H1 (cell line): ENCODE measurements at regions of chr2 and their contacts with region 1.

Region 1: DNA sequence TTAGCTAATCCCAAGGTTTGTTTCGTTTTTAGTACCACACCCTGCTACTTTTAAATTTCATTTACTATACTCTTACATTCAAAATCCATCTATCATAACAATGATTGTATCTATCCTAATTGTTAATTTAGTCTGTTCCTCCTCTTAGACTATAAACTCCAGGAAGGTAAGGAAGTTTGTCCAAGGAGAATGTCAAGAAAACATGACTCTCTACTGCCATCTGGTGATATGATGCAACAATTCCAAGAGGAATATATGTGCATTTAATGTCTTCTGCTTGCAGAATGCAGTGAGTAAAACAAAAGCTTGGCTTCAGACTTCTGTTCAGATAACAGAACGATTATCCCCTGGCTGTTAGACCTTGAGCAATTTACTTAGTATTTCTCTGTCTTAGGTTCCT is 1267.1 kb downstream of the LRP1B start:
- DNase-seq: no peak
- H3K4me3 ChIP-seq: no peak overlapping the region
- H3K27ac ChIP-seq: no peak overlapping the region
- H3K4me1 ChIP-seq: peaks cover 0 to 5% (median 0%) of the 10 kb centered on the region in 4 experiments; a peak in 2 of 7 replicates
- H3K27me3 ChIP-seq: no peaks in the 10 kb centered on the region
- CTCF ChIP-seq: peak in 2 of 3 experiments; percentile 34 to 58; a peak in 2 of 4 replicates
- EP300 ChIP-seq: no peak
- POLR2A ChIP-seq: no peak
- RAD21 ChIP-seq: peak; percentile 63 to 73

Region 2: GRCh38 chr2:140842110-140842509 is 21.6 kb before region 1 on chr2:
- CTCF ChIA-PET with region 1: interaction called, 13 read pairs
- POLR2A ChIA-PET with region 1: no interaction called
- DNase-seq: no peak
- H3K4me3 ChIP-seq: no peak overlapping the region
- H3K27ac ChIP-seq: no peak overlapping the region
- H3K4me1 ChIP-seq: no peaks in the 10 kb centered on the region
- H3K27me3 ChIP-seq: no peaks in the 10 kb centered on the region
- CTCF ChIP-seq: no peak
- EP300 ChIP-seq: no peak
- POLR2A ChIP-seq: no peak
- RAD21 ChIP-seq: no peak

Region 3: GRCh38 chr2:140873915-140874531 is 10.3 kb after region 1 on chr2:
- CTCF ChIA-PET with region 1: interaction called, 12 read pairs
- POLR2A ChIA-PET with region 1: no interaction called
- DNase-seq: no peak
- H3K4me3 ChIP-seq: no peak overlapping the region
- H3K27ac ChIP-seq: no peak overlapping the region
- H3K4me1 ChIP-seq: no peaks in the 10 kb centered on the region
- H3K27me3 ChIP-seq: no peaks in the 10 kb centered on the region
- CTCF ChIP-seq: no peak
- EP300 ChIP-seq: no peak
- POLR2A ChIP-seq: no peak
- RAD21 ChIP-seq: no peak

Region 4: GRCh38 chr2:140916410-140916809 is 52.7 kb after region 1 on chr2:
- CTCF ChIA-PET with region 1: no interaction called
- POLR2A ChIA-PET with region 1: no interaction called
- DNase-seq: no peak
- H3K4me3 ChIP-seq: no peak overlapping the region
- H3K27ac ChIP-seq: no peak overlapping the region
- H3K4me1 ChIP-seq: no peaks in the 10 kb centered on the region
- H3K27me3 ChIP-seq: no peaks in the 10 kb centered on the region
- CTCF ChIP-seq: no peak
- EP300 ChIP-seq: no peak
- POLR2A ChIP-seq: no peak
- RAD21 ChIP-seq: no peak